B cell (primary cell): ENCODE measurements at regions of chr6 and their contacts with region 1.

Region 1: DNA sequence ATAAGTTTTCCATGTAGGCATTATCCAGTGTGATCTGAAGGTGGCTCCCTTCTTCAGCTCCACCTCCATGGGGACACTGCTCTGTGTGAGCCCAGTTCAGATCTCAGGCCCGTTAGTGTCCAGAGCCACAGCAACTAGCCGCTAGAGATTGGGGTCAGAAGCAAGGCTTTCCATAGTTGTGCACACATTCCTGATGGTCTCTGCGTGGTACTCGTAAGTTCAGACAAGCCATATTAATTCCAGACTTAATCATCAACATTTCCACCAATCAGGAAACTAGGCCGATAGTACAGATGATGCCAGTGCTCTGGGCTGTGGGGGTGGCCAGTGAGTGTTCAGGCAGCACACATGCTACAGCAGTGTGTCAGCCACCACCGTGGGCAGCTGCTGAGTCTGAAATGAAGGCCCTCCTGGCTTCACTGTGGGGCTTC is 17.5 kb upstream of the SYNCRIP start:
- DNase-seq: no peak
- ATAC-seq: no peak
- H3K4me3 ChIP-seq: no peak overlapping the region
- H3K4me3 Mint-ChIP-seq: no peak overlapping the region
- H3K27ac ChIP-seq: no peak overlapping the region
- H3K27ac Mint-ChIP-seq: no peak overlapping the region
- H3K4me1 ChIP-seq: no peaks in the 10 kb centered on the region
- H3K4me1 Mint-ChIP-seq: no peaks in the 10 kb centered on the region
- H3K27me3 ChIP-seq: no peaks in the 10 kb centered on the region
- H3K27me3 Mint-ChIP-seq: no peaks in the 10 kb centered on the region
- CTCF ChIP-seq: no peak

Region 2: GRCh38 chr6:85412911-85413430 is 247.2 kb before region 1 on chr6:
- CTCF ChIA-PET with region 1: no interaction called
- POLR2A ChIA-PET with region 1: interaction called, 14 read pairs
- intact Hi-C with region 1: no loop called
- DNase-seq: no peak
- ATAC-seq: no peak
- H3K4me3 ChIP-seq: no peak overlapping the region
- H3K4me3 Mint-ChIP-seq: no peak overlapping the region
- H3K27ac ChIP-seq: no peak overlapping the region
- H3K27ac Mint-ChIP-seq: no peak overlapping the region
- H3K4me1 ChIP-seq: peaks cover 3 to 4% of the 10 kb centered on the region in 2 donors
- H3K4me1 Mint-ChIP-seq: peaks cover 8% of the 10 kb centered on the region
- H3K27me3 ChIP-seq: no peaks in the 10 kb centered on the region
- H3K27me3 Mint-ChIP-seq: peaks cover 15% of the 10 kb centered on the region
- CTCF ChIP-seq: no peak